Activated CD8-positive, alpha-beta T cell treated with anti-CD3 and anti-CD28 coated beads, Interleukin-2, amount 10 ng/mL, durations not matched to agents 7 days and 5 days (primary cell): ENCODE measurements at regions of chr18 and their contacts with region 1.

Region 1: GRCh38 chr18:10841203-10841602 is 308.2 kb downstream of the PIEZO2 start:
- DNase-seq: no peak
- ATAC-seq: no peak
- H3K4me3 Mint-ChIP-seq: no peak overlapping the region
- H3K27ac Mint-ChIP-seq: no peak overlapping the region
- H3K4me1 Mint-ChIP-seq: no peaks in the 10 kb centered on the region
- H3K27me3 Mint-ChIP-seq: peaks cover 6% of the 10 kb centered on the region

Region 2: GRCh38 chr18:10798727-10799308 is 42.4 kb before region 1 on chr18:
- CTCF ChIA-PET with region 1: no interaction called
- POLR2A ChIA-PET with region 1: no interaction called
- DNase-seq: no peak
- ATAC-seq: no peak
- H3K4me3 Mint-ChIP-seq: no peak overlapping the region
- H3K27ac Mint-ChIP-seq: no peak overlapping the region
- H3K4me1 Mint-ChIP-seq: no peaks in the 10 kb centered on the region
- H3K27me3 Mint-ChIP-seq: peaks cover under 1% of the 10 kb centered on the region

Region 3: DNA sequence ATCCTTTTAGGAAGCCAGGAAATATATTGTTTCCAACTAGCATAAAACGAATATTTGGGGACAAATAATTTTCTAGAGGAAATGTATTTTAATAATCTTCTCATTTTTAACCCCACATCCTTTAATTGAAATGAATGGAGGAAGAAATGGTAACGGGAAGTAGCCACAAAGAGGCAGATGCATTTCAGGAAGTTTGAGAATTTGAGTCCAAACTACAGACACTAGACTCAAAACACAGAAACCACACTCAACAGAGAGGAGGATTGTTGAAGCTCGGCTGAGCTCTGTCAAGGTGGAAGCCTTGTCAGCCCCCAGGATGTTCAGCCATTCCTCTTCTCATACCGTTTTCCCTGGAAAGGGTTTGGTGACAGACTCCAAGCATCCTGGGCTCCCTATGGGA is 26.9 kb before region 1 on chr18:
- CTCF ChIA-PET with region 1: no interaction called
- POLR2A ChIA-PET with region 1: no interaction called
- DNase-seq: no peak
- ATAC-seq: no peak
- H3K4me3 Mint-ChIP-seq: no peak overlapping the region
- H3K27ac Mint-ChIP-seq: no peak overlapping the region
- H3K4me1 Mint-ChIP-seq: no peaks in the 10 kb centered on the region
- H3K27me3 Mint-ChIP-seq: no peaks in the 10 kb centered on the region

Region 4: DNA sequence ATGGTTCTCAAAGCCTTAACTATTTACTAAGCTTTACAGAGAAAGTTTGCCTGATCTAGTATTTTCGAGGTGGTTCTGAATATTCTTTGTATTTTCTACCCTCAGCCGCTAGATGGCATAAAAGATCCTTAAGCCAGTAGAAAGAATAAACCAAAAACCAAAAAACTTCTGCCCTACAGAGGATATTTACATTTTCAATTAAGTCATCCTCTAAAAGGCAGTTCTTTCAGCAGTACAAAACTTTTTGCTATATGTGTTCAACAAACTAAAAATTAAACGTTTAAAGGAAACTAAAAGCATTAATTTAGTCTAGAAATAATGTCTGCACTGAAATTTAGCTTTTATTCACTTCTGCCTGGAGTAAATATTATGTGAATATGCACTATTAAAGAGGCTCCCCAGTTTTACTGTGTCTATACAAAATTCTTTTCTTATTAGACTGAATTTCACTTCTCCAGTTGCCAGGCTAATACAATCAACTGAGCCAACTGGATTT is 10.7 kb after region 1 on chr18:
- CTCF ChIA-PET with region 1: interaction called, 12 read pairs
- POLR2A ChIA-PET with region 1: no interaction called
- DNase-seq: no peak
- ATAC-seq: no peak
- H3K4me3 Mint-ChIP-seq: no peak overlapping the region
- H3K27ac Mint-ChIP-seq: no peak overlapping the region
- H3K4me1 Mint-ChIP-seq: no peaks in the 10 kb centered on the region
- H3K27me3 Mint-ChIP-seq: peaks cover 8% of the 10 kb centered on the region